Calu3 (cell line): ENCODE measurements at regions of chr14 and their contacts with region 1.

Region 1: GRCh38 chr14:67187210-67187609 is 2.0 kb upstream of the GARIN2 start:
- DNase-seq: peak; percentile 59
- H3K4me3 Mint-ChIP-seq: no peak overlapping the region
- H3K27ac Mint-ChIP-seq: no peak overlapping the region
- H3K4me1 Mint-ChIP-seq: peaks cover 13% of the 10 kb centered on the region
- H3K27me3 Mint-ChIP-seq: no peaks in the 10 kb centered on the region
- CTCF ChIP-seq: no peak

Region 2: DNA sequence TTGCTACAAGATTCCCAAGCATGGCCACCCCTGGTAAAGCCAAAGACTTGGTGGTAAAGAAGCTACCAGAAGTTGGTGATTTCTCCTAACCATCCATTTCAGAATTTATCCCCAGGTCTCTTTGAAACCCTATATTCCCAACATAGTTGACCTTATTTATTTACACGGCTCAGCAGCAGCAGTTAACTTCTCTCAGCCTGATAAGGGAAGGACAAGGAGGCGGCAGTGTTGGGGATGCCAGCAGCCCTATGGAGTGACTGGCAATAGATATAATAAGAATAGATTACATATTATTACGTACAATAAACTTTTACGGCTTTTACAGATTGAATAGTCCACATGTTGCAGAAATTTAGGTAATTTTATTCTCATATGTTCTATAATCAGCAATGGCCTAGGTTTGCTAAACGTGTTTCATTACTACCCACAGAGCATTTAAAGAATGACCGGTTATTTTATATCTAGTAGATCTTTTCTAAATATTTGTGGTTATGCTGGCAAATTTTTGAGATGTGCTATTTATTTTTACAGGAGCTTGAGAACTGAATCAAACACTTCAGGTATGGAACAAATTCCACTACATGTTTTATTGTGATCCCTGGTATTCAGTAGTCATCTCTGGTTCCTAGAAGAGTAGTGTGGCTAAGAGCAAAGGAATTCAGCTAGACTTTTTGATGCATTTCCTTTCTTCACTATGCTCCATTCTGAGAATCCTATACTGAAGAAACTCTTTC is 34.2 kb after region 1 on chr14:
- CTCF ChIA-PET with region 1: no interaction called
- intact Hi-C with region 1: loop called (anchors 5 kb)
- DNase-seq: no peak
- H3K4me3 Mint-ChIP-seq: no peak overlapping the region
- H3K27ac Mint-ChIP-seq: no peak overlapping the region
- H3K4me1 Mint-ChIP-seq: peaks cover 12% of the 10 kb centered on the region
- H3K27me3 Mint-ChIP-seq: no peaks in the 10 kb centered on the region
- CTCF ChIP-seq: no peak

Region 3: GRCh38 chr14:67240978-67241414 is 53.8 kb after region 1 on chr14:
- CTCF ChIA-PET with region 1: interaction called, 4 read pairs
- intact Hi-C with region 1: loop called (anchors 2 kb)
- DNase-seq: peak; percentile 96
- H3K4me3 Mint-ChIP-seq: peak overlapping the region; percentile 73
- H3K27ac Mint-ChIP-seq: peak overlapping the region; percentile 63
- H3K4me1 Mint-ChIP-seq: peaks cover 18% of the 10 kb centered on the region
- H3K27me3 Mint-ChIP-seq: no peaks in the 10 kb centered on the region
- CTCF ChIP-seq: no peak

Region 4: GRCh38 chr14:67365476-67365875 is 178.3 kb after region 1 on chr14:
- CTCF ChIA-PET with region 1: no interaction called
- intact Hi-C with region 1: no loop called
- DNase-seq: no peak
- H3K4me3 Mint-ChIP-seq: no peak overlapping the region
- H3K27ac Mint-ChIP-seq: no peak overlapping the region
- H3K4me1 Mint-ChIP-seq: peaks cover 24% of the 10 kb centered on the region
- H3K27me3 Mint-ChIP-seq: no peaks in the 10 kb centered on the region
- CTCF ChIP-seq: no peak